Activated CD4-positive, alpha-beta memory T cell treated with anti-CD3 and anti-CD28 coated beads for 36 hours (primary cell): ENCODE measurements at regions of chr1 and their contacts with region 1.

Region 1: GRCh38 chr1:228293816-228294500 is 86.1 kb downstream of the OBSCN start:
- DNase-seq: no peak
- H3K4me3 Mint-ChIP-seq: no peak overlapping the region
- H3K27ac Mint-ChIP-seq: no peak overlapping the region
- H3K4me1 Mint-ChIP-seq: no peaks in the 10 kb centered on the region
- H3K27me3 Mint-ChIP-seq: no peaks in the 10 kb centered on the region

Region 2: DNA sequence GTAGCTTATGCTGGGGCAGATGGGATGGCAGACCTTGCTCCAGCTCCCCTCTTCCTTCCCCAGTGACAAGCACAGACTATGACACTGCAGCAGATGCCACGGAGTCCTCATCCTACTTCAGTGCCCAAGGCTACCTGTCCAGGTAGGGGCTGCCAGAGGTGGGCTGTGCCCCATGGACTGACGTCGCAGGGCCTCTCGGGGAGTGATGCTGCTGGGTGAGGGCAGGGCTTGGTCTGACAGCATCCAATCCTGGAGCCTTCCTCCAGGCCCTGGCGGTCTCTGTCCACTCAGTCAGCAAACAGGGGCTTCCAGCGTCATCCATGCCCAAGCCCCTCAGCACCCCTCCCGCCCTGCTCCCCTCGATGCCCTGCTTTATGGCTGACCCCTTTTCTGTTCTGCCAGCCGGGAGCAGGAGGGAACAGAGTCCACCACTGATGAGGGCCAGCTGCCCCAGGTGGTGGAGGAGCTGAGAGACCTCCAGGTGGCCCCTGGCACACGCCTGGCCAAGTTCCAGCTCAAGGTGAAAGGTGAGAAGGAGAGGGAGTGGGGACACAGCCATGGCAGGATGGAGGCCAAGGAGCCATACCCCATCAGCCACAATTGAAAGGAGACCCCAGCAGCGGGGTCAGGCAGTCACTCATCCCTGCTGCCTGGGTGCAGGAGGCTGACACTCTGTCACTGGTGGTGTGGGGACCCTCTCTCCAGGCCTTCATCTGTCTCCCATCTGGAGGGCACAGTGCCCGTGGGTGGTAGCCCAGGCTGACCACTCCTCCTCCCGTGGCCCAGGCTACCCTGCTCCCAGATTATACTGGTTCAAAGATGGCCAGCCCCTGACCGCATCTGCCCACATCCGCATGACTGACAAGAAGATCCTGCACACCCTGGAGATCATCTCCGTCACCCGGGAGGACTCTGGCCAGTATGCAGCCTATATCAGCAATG is 39.1 kb after region 1 on chr1:
- CTCF ChIA-PET with region 1: no interaction called
- POLR2A ChIA-PET with region 1: no interaction called
- intact Hi-C with region 1: loop called (anchors 1 kb)
- DNase-seq: no peak
- H3K4me3 Mint-ChIP-seq: no peak overlapping the region
- H3K27ac Mint-ChIP-seq: no peak overlapping the region
- H3K4me1 Mint-ChIP-seq: no peaks in the 10 kb centered on the region
- H3K27me3 Mint-ChIP-seq: no peaks in the 10 kb centered on the region